ENCODE measurements at regions of chr2 and their contacts with region 1.

Region 1: DNA sequence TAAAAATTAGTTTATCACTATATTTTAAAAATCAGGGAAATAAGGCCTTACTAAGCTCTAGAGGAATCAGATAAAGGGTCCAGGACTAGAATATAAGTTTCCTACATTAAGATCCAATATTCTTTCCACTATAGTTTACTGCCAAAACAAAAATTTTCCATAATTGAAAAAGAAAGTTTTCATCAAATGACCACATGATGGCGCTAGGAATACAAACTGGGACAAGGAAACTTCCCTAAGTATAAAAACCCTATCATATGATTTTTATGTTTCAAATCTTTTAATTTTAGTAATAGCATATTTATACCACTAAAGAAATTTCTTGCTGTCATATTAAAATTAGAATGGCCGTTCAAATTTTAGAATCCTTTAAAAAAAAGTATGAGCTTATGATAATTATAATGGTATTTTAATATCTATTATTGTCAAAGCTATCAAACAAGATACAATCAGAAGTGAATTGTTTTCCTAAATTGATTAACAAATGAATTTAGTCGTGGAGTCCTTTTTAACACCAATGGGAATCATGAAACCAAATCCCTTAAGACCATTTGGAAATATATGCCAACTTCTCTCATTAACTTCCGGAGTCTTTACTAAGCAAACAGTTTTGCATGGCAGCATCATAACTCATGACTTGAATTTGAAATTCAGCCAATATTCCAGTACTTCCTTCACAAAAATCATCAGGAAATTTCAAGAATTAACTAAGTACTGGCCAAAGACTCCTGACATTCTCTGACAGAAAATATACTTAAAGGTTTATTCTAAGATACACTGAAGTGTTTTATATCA is 70.3 kb downstream of the SCN1A start:
- DNase-seq: no peak
- H3K4me3 ChIP-seq: no peak overlapping the region
- H3K27ac ChIP-seq: no peak overlapping the region
- H3K27me3 ChIP-seq: no peaks in the 10 kb centered on the region
- CTCF ChIP-seq: peak; percentile 64

Region 2: GRCh38 chr2:165815299-165816141 is 242.0 kb before region 1 on chr2:
- CTCF ChIA-PET with region 1: no interaction called
- POLR2A ChIA-PET with region 1: no interaction called
- DNase-seq: no peak
- H3K4me3 ChIP-seq: no peak overlapping the region
- H3K27ac ChIP-seq: no peak overlapping the region
- H3K27me3 ChIP-seq: no peaks in the 10 kb centered on the region
- CTCF ChIP-seq: no peak

Region 3: DNA sequence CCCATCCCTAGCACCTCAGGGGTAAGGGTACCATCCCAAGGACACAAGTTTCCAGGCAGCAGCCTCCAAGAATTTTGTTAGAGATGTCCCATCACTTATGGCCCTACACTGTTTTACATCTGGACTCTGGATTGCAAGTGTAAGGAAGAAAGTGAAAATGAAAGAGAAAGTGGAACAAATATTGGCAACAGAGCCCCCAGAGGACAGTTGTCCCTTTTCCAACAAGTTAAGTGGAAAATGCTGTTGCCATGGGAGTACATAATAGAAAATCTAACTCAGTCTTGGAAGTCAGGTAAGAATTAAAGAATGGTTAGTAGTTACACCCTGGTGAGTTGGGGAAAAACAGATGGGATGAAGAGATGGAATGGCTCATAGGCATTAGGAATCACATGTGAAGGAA is 154.6 kb before region 1 on chr2:
- CTCF ChIA-PET with region 1: no interaction called
- POLR2A ChIA-PET with region 1: no interaction called
- DNase-seq: no peak
- H3K4me3 ChIP-seq: no peak overlapping the region
- H3K27ac ChIP-seq: no peak overlapping the region
- H3K27me3 ChIP-seq: no peaks in the 10 kb centered on the region
- CTCF ChIP-seq: no peak

Region 4: DNA sequence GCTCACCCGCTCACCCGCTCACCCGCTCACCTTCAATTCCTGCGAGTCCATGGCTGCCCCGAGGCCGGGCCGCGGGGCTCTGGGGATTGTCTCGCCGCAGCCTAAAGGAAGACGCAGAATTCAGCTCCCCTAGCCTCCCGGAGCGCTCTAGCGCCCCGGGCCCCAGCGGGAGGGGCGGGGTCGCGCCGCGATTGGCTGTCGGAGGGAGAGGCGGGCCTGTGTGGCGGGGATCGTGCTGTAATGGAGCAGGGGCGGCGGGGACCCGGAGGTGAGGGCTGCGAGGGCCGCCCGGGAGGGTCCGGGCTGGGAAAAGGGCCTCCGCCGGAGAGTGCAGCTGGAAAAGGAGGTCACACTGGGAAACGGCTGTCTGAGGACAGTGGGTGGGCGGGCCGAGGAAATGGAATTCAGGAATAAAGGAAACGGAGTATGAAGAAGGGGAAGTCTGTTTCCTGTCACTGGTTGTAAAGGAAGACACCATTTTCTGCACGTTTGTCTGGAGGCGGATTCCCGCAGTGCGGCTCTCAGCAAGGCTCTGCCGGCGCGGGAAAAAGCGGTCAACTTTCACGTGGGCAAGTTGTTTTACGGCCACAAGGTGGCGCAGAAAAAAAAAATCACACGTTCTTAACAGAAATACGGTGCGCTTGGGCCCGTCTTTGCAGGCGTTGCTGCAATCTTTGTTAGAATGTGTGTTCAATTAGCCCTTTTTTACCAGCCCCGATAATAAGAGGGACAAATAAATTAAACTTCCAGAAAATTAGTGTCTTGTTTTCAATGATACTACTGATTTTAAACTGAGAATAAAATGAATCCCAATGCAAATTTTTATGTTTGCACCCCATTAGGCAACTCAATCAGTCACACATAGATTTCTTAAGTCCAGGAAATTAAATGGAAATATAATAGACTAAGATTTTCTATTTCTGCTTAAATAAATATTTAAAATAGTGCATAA is 103.6 kb before region 1 on chr2 and contains the start of gene TTC21B:
- CTCF ChIA-PET with region 1: interaction called, 17 read pairs
- POLR2A ChIA-PET with region 1: no interaction called
- DNase-seq: peak; percentile 87
- H3K4me3 ChIP-seq: peak within 1 kb of the TSS; percentile 74
- H3K27ac ChIP-seq: peak within 1 kb of the TSS; percentile 83
- H3K27me3 ChIP-seq: no peaks in the 10 kb centered on the region
- CTCF ChIP-seq: peak; percentile 84
- polyA plus RNA-seq, gene TTC21B: 11.1 and 12.1 TPM in 2 replicates

Region 5: DNA sequence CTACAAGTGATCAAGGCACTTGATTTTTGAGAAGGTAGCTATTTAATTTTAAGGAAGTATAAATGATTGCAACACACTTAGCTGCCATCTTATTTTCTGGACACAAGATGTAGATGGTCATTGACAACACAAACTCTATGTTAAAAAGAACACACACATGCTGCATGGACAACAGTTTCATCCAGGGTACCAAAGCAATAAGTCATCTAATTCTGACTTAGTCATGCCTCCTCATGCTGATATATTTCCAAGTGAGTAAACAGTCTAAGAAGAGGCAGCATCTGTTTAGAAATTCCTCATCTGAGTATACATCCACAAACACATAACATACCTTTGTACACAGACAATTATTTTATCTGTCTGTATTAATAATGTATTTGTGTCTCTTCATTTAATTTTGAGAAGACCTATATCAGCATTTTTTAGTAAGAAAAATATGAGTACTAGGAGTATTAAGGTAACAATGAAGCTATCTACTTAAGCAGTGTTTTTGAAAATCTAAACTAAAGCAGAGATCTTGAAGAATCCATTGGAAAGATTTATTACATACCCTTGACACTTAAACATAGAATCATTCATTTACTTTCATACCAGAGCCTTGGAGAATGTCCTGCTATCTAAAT is 14.7 kb before region 1 on chr2:
- CTCF ChIA-PET with region 1: interaction called, 16 read pairs
- POLR2A ChIA-PET with region 1: no interaction called
- DNase-seq: no peak
- H3K4me3 ChIP-seq: no peak overlapping the region
- H3K27ac ChIP-seq: no peak overlapping the region
- H3K27me3 ChIP-seq: no peaks in the 10 kb centered on the region
- CTCF ChIP-seq: no peak

Region 6: GRCh38 chr2:166081131-166081632 is 23.6 kb after region 1 on chr2:
- CTCF ChIA-PET with region 1: interaction called, 11 read pairs
- POLR2A ChIA-PET with region 1: no interaction called
- DNase-seq: no peak
- H3K4me3 ChIP-seq: no peak overlapping the region
- H3K27ac ChIP-seq: no peak overlapping the region
- H3K27me3 ChIP-seq: no peaks in the 10 kb centered on the region
- CTCF ChIP-seq: no peak

Region 7: GRCh38 chr2:166106431-166107015 is 49.0 kb after region 1 on chr2:
- CTCF ChIA-PET with region 1: interaction called, 38 read pairs
- POLR2A ChIA-PET with region 1: no interaction called
- DNase-seq: no peak
- H3K4me3 ChIP-seq: no peak overlapping the region
- H3K27ac ChIP-seq: no peak overlapping the region
- H3K27me3 ChIP-seq: no peaks in the 10 kb centered on the region
- CTCF ChIP-seq: peak; percentile 55

Region 8: GRCh38 chr2:166140932-166141331 is 83.4 kb after region 1 on chr2:
- CTCF ChIA-PET with region 1: interaction called, 10 read pairs
- POLR2A ChIA-PET with region 1: no interaction called
- DNase-seq: no peak
- H3K4me3 ChIP-seq: no peak overlapping the region
- H3K27ac ChIP-seq: no peak overlapping the region
- H3K27me3 ChIP-seq: no peaks in the 10 kb centered on the region
- CTCF ChIP-seq: no peak

Region 9: DNA sequence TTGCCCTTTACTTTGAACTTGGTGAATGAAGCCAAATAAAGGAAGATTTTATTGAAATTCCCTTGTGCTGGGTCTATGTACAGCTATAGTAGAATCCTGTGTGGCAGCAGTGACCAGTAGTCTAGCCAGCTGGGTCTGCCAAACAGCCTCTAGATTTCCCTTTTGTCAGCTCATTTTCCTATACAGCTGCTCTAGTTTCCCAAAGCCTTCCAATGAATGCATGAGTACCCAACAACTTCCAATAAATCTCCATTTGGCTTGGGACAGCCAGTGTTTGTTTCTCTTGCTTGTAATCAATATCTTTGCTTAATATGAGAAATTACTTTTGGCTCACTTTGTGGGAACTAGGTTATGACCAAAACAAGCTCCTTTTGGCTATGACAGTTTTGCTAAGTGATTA is 274.5 kb after region 1 on chr2:
- CTCF ChIA-PET with region 1: no interaction called
- POLR2A ChIA-PET with region 1: no interaction called
- DNase-seq: no peak
- H3K4me3 ChIP-seq: no peak overlapping the region
- H3K27ac ChIP-seq: no peak overlapping the region
- H3K27me3 ChIP-seq: no peaks in the 10 kb centered on the region
- CTCF ChIP-seq: no peak

Measured in AG04450 (cell line).